Mammary epithelial cell (primary cell): ENCODE measurements at regions of chr3 and their contacts with region 1.

Region 1: DNA sequence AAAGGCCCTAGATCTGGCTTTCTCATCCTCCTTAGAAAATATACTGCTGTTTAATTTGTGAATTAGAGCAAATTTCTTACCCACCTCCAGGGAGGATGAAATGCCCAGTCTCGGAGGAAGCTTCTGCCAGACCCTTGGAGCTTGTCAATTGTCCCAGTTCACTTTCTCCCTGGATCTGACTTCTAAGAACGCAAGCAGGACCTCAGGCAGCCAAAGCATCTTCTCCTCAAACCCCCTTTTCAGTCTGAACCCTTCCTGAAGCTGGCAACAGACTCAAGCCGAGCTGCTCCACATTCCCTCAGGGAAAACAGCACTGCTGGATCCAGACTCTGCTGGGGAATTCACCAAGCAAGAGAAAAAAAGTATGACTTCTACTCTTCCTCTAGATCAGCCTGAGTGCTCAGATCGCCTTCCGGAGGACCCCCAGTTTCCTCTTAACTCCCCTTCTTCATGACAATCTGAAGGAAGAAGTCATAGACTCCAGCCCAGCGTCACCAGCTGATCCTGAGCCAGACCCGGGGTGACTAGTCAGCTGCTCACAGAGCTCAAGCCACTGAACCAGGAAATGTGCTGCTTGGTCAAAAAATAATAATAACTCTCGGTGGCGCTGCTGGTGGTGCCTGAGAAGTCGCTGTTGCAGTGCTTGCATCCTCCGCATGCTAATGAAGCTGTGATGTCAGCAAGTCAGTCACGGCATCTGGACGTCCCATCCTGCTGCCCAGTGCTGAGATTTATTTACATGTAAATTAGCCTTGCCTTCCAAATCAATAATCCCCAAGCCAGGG is at the start of gene PRICKLE2:
- DNase-seq: peak; percentile 81
- H3K4me3 ChIP-seq: peak within 1 kb of the TSS in 2 of 3 experiments; percentile 7 to 25
- H3K27ac ChIP-seq: peak within 1 kb of the TSS; percentile 62
- H3K4me1 ChIP-seq: peaks cover 29% of the 10 kb centered on the region
- H3K27me3 ChIP-seq: no peaks in the 10 kb centered on the region
- CTCF ChIP-seq: peak; percentile 26 to 36
- total RNA-seq, gene PRICKLE2: 23.2 to 50.5 TPM

Region 2: GRCh38 chr3:64030741-64031140 is 194.3 kb before region 1 on chr3:
- CTCF ChIA-PET with region 1: no interaction called
- dilution Hi-C with region 1: no loop called
- in situ Hi-C with region 1: loop called in 1 of 2 experiments (anchors 10 kb)
- intact Hi-C with region 1: loop called (anchors 1 kb)
- DNase-seq: peak; percentile 58
- H3K4me3 ChIP-seq: peak overlapping the region in 1 of 3 experiments; percentile 6
- H3K27ac ChIP-seq: peak overlapping the region; percentile 16
- H3K4me1 ChIP-seq: peaks cover 9% of the 10 kb centered on the region
- H3K27me3 ChIP-seq: no peaks in the 10 kb centered on the region
- CTCF ChIP-seq: peak; percentile 64 to 94

Region 3: GRCh38 chr3:64176461-64176996 is 48.5 kb before region 1 on chr3:
- CTCF ChIA-PET with region 1: no interaction called
- dilution Hi-C with region 1: no loop called
- in situ Hi-C with region 1: no loop called
- intact Hi-C with region 1: no loop called
- DNase-seq: peak; percentile 87
- H3K4me3 ChIP-seq: peak overlapping the region in 1 of 3 experiments; percentile 1
- H3K27ac ChIP-seq: peak overlapping the region; percentile 79
- H3K4me1 ChIP-seq: peaks cover 34% of the 10 kb centered on the region
- H3K27me3 ChIP-seq: no peaks in the 10 kb centered on the region
- CTCF ChIP-seq: no peak

Region 4: GRCh38 chr3:64238971-64239667 is 14.1 kb after region 1 on chr3:
- CTCF ChIA-PET with region 1: interaction called, 6 read pairs
- dilution Hi-C with region 1: no loop called
- in situ Hi-C with region 1: no loop called
- intact Hi-C with region 1: loop called (anchors 1 kb)
- DNase-seq: peak; percentile 83
- H3K4me3 ChIP-seq: peak overlapping the region in 2 of 3 experiments; percentile 3 to 6
- H3K27ac ChIP-seq: peak overlapping the region; percentile 31
- H3K4me1 ChIP-seq: peaks cover 13% of the 10 kb centered on the region
- H3K27me3 ChIP-seq: no peaks in the 10 kb centered on the region
- CTCF ChIP-seq: peak in 1 of 2 donors; percentile 2

Region 5: GRCh38 chr3:64327100-64327804 is 102.2 kb after region 1 on chr3:
- CTCF ChIA-PET with region 1: no interaction called
- dilution Hi-C with region 1: no loop called
- in situ Hi-C with region 1: no loop called
- intact Hi-C with region 1: loop called (anchors 5 kb)
- DNase-seq: no peak
- H3K4me3 ChIP-seq: no peak overlapping the region
- H3K27ac ChIP-seq: no peak overlapping the region
- H3K4me1 ChIP-seq: peaks cover 1% of the 10 kb centered on the region
- H3K27me3 ChIP-seq: no peaks in the 10 kb centered on the region
- CTCF ChIP-seq: no peak